HEK293 (cell line): ENCODE measurements at regions of chr16 and their contacts with region 1.

Region 1: DNA sequence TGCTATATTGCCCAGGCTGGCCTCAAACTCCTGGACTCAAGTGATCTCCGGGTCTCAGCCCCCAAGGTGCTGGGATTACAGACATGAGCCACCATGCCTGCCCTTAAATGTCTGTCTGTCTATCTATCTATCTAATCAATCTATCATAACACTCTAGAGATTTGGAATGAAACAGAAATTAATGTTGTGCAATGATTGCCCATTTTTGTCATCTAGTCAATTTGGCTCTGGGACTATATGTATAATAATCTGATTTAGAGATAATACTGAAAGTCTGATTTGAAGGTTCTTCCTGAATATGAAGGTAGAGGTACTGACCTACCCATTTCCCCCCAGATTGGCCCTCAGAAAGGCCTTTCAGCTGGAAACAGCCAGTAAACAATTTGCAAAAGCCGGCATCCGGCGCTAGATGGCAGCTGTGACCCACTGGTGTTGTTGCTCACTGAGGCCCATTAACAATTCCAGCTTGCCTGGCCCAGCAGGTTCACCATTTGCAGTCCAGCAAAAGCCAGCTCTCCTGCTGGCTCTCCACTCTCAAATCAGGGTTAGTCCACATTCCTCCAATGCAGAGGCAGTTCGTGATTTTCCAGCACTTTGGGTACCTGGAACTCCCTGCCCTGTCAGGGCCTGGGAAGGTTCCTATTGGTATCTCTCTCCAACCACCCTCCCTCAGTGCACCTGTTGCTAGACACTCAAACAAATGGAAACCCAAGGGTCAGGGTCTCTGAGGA is 22.9 kb upstream of the C16orf87 start:
- H3K4me3 ChIP-seq: no peak overlapping the region
- H3K27ac ChIP-seq: no peak overlapping the region
- H3K4me1 ChIP-seq: no peaks in the 10 kb centered on the region
- CTCF ChIP-seq: peak; percentile 78

Region 2: DNA sequence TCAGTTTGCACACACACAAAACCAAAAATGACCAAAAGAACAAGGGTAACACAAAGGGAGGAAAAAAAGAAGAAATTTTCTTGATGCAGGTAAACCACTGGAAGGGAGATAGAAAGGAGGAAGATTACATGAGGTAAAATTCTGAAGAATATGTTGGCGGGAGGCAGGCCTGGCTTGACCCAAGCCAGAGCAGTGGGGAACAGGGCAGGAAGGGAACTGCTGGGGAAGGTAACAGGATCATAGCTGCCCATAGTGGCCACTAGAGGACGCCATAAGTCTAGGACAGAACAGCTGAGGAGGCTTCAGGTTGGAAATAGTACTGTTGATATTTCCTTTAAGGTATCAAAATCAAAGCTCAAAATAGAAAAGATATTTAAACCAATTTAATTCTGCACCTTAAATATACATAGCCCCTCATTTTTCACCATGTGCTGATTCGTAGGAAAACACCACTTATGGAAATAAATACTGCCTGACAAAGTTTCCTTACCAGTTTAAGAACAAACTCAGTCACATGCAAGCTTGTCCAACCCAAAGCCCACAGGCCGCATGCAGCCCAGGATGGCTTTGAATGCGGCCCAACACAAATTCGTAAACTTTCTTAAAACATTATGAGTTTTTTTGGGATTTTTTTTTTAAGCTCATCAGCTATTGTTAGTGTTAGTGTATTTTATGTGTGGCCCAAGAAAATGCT is 180.4 kb before region 1 on chr16:
- CTCF ChIA-PET with region 1: interaction called, 12 read pairs
- POLR2A ChIA-PET with region 1: no interaction called
- H3K4me3 ChIP-seq: no peak overlapping the region
- H3K27ac ChIP-seq: no peak overlapping the region
- H3K4me1 ChIP-seq: no peaks in the 10 kb centered on the region
- CTCF ChIP-seq: peak; percentile 65

Region 3: DNA sequence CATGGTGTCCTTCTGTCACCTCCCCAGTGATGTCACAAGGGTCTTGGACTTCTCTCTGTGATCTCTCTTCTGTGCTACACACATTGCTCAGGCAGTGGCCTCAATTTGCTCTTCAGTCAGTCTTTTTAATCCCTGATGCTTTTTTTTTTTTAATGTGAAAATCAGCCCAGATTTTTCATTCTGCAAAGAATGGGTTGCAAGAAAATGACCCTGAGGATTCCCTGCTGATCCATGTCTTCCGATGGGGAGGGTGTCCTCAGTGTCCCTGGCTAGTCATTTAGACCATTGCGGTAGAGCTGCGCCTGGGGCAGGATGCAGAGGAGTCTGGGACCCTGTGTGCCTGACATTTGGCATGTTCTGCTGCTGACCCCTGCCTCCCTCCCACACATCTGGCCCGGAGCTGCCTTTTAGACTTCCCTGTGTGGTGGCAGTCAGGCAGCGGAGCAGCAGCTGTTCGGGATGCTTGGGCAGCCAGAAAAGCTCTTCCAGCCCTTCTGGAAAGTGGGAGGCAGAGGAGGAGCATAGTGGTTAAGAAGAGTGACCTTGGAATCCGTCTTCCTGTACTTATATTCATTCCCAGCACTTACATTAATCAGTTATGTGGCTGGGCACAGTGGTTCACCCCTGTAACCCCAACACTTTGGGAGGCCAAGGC is 42.6 kb after region 1 on chr16:
- CTCF ChIA-PET with region 1: interaction called, 14 read pairs
- POLR2A ChIA-PET with region 1: no interaction called
- H3K4me3 ChIP-seq: no peak overlapping the region
- H3K27ac ChIP-seq: no peak overlapping the region
- H3K4me1 ChIP-seq: no peaks in the 10 kb centered on the region
- CTCF ChIP-seq: no peak

Region 4: DNA sequence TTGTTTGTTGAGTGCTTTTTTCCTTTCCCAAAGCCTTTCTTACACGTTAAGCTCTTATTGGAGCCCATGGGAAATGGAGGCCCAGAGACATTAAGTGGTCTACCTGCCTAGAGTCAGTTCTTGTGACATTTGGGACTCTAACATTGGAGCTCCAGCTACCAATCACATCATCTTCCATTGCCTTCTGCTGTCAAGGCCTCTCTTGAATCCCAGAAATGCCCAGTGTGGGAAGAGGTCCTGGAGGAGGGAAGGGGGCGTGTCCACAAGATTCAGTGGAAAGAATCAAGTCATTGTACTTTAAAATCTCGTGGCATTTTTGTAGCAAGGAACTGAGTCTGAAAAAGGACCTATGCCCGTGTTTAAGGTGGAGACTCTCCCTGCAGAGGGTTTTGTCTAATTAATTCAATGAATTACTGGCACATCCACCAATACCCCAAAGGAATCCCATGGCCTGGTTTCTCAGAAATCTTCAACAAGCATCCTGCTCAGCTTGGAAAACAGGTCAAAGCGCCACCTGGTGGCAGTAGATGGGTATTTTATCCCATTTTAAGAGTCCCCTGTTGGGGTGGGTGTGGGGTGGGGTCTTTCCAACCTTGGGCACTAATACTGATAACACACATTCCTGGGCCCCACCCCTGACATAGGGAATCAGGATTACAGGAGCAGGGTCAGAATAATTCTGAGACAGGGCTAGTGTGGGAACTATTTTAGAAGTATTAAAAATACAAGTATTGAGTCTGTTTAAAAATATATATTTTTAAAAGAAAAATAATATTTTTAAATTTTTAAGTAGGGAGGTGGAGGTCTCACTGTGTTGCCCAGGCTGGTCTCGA is 54.9 kb after region 1 on chr16:
- CTCF ChIA-PET with region 1: interaction called, 56 read pairs
- POLR2A ChIA-PET with region 1: interaction called, 3 read pairs
- H3K4me3 ChIP-seq: no peak overlapping the region
- H3K27ac ChIP-seq: no peak overlapping the region
- H3K4me1 ChIP-seq: no peaks in the 10 kb centered on the region
- CTCF ChIP-seq: no peak

Region 5: GRCh38 chr16:46929378-46930332 is 75.8 kb after region 1 on chr16:
- CTCF ChIA-PET with region 1: interaction called, 24 read pairs
- POLR2A ChIA-PET with region 1: interaction called, 3 read pairs
- H3K4me3 ChIP-seq: no peak overlapping the region
- H3K27ac ChIP-seq: no peak overlapping the region
- H3K4me1 ChIP-seq: no peaks in the 10 kb centered on the region
- CTCF ChIP-seq: peak; percentile 68